ENCODE measurements at regions of chr6 and their contacts with region 1.

Region 1: DNA sequence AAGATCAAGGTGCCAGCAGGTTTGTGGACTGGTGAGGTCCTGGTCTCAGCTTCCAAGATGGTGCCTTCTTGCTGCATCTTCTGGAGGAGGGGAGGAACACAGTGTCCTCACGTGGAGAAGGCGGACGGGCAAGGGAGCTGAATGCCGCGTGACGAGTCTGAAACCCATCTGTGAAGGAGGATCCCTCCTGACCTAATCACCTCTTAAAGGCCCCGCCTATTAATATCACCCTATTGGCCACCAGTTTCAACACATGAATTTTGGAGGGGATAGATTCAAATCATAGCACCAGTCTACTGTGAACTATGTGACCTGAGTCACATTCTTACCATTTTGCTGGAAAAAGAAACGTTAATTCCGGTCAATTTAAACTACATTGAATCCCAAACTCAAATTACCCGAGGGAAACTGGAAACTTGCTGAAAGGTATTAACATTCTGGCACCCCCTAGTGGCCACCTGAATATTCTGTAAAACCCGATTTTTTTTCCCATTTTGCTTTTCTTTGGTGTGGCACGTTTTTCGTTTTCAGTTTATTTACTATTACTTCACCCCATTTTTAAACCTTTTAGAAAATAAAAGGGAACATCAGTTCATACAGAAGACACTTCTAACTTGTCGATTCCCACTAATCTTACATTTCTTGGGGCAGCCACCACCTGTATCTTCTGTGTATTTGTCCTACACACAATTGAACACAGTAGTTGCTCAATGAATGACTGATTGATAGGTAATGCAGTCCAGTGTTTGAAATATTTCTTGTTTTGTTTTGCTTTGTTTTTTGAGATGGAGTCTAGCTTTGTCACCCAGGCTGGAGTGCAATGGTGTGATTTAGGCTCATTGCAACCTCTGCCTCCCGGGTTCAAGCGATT is 17.9 kb upstream of the CCDC170 start:
- DNase-seq: no peak
- ATAC-seq: peak; percentile 74
- H3K4me3 ChIP-seq: no peak overlapping the region
- H3K27ac ChIP-seq: no peak overlapping the region
- H3K4me1 ChIP-seq: peaks cover 0 to 2% of the 10 kb centered on the region in 2 donors
- H3K27me3 ChIP-seq: no peaks in the 10 kb centered on the region

Region 2: DNA sequence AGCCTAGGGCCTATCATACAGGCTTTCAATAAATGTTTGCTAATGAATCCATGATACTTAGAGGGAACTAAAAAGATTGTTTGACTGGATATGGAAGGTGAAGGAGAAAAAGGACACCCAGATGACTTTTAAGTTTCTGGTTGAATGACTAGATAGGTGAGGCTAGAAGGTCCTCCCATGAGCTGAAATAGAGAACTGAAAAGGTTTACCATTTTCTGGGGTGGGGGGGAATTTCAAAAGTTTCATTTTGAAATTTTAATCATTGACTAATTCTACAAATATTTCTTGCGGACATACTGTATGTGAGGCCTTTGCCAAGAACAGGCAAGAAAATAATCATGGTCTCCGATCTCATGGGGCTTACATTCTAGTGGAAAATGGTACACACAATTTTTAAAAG is 66.6 kb before region 1 on chr6:
- intact Hi-C with region 1: loop called (anchors 5 kb)
- DNase-seq: no peak
- ATAC-seq: no peak
- H3K4me3 ChIP-seq: no peak overlapping the region
- H3K27ac ChIP-seq: no peak overlapping the region
- H3K4me1 ChIP-seq: no peaks in the 10 kb centered on the region
- H3K27me3 ChIP-seq: no peaks in the 10 kb centered on the region

Region 3: GRCh38 chr6:151440930-151441329 is 35.0 kb before region 1 on chr6:
- intact Hi-C with region 1: loop called (anchors 2 to 5 kb)
- DNase-seq: no peak
- ATAC-seq: no peak
- H3K4me3 ChIP-seq: no peak overlapping the region
- H3K27ac ChIP-seq: no peak overlapping the region
- H3K4me1 ChIP-seq: peaks cover 6 to 7% of the 10 kb centered on the region in 2 donors
- H3K27me3 ChIP-seq: no peaks in the 10 kb centered on the region